ENCODE measurements at regions of chr17 and their contacts with region 1.

Region 1: GRCh38 chr17:49656247-49656646 is 21.6 kb downstream of the SPOP start:
- DNase-seq: no peak
- H3K4me3 ChIP-seq: no peak overlapping the region
- H3K27ac ChIP-seq: no peak overlapping the region
- H3K4me1 ChIP-seq: peaks cover 7% of the 10 kb centered on the region
- H3K27me3 ChIP-seq: no peaks in the 10 kb centered on the region
- CTCF ChIP-seq: no peak

Region 2: GRCh38 chr17:49616601-49617131 is 39.6 kb before region 1 on chr17:
- CTCF ChIA-PET with region 1: no interaction called
- POLR2A ChIA-PET with region 1: no interaction called
- intact Hi-C with region 1: no loop called
- DNase-seq: no peak
- H3K4me3 ChIP-seq: no peak overlapping the region
- H3K27ac ChIP-seq: no peak overlapping the region
- H3K4me1 ChIP-seq: peaks cover 11% of the 10 kb centered on the region
- H3K27me3 ChIP-seq: no peaks in the 10 kb centered on the region
- CTCF ChIP-seq: no peak

Region 3: DNA sequence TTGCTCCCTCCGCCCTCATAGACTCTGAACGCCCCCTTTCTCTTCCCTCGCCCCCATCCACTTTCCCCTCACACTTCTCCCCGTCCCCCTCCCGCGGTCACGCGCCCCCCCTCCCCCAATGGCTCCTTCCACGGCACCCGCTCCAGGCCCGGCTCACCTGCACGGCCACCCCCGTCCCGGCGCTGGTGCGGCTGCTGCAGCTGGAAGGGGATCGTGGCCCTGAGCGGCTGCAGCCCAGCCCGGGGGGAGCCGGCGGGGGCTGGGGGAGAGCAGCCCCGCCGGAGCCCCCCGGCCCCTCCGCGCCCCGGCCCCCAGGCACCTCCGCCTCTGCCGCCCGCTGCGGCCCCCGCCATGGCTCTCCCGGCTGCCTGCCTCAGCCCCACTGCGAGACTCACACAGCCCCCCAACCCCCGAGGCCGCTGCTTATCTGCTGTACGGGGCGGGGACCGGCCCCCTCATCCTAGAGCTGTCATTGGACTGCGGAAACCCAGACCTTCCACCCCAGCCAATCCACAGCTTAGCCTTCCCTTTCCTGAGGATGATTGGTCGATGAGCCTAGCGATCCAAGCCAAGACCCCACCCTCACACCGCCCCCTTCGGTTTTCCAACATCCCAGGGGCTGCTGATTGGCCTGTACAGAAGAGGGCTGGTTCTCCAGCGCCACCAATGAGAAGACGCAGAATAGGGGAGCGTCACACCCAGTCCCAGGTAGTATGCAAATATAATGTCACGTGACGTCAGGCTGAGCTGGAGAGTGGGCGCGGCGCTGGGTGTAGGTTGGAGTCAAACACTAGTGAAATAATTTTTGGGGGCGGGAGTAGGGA is 107.7 kb after region 1 on chr17 and contains the start of gene FAM117A:
- CTCF ChIA-PET with region 1: no interaction called
- POLR2A ChIA-PET with region 1: interaction called, 12 read pairs
- intact Hi-C with region 1: no loop called
- DNase-seq: peak; percentile 100
- H3K4me3 ChIP-seq: peak within 1 kb of the TSS; percentile 69
- H3K27ac ChIP-seq: peak within 1 kb of the TSS; percentile 28
- H3K4me1 ChIP-seq: peaks cover 15% of the 10 kb centered on the region
- H3K27me3 ChIP-seq: peaks cover 9% of the 10 kb centered on the region
- CTCF ChIP-seq: no peak
- total RNA-seq, gene FAM117A: 10.1 and 10.8 TPM in 2 replicates